ENCODE measurements at regions of chr4 and their contacts with region 1.

Region 1: DNA sequence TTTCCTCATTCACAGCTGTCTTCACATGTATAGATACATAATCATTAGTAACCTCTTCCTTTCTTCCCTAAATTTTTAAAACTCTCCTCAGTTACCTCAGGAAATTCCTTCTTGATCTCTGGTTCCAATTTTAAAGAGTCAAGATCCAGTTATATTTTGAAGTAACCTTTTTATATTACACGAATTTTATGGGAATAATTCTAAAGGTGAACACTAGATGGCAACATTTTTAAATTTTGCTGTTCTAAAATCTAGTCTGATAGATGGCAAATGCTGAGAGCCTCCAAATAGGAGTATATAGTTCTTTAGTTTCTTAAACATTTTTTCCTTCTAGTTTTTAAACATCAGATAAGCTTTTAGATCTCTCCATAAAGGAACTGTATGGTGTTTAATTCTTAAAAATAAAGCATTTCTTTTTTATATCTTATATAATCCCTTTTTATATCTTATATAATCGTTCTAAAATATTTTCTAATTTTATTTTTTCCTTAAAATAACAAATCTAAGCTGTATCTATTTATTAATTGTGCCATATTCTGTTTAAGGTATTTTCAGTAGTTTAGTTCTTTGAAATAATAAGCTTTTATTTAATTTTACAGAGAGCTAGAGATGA is 37.9 kb upstream of the PAPSS1 start:
- DNase-seq: peak; percentile 13
- H3K4me3 ChIP-seq: no peak overlapping the region
- CTCF ChIP-seq: no peak

Region 2: GRCh38 chr4:107719922-107720722 is 37.8 kb before region 1 on chr4 and contains the start of gene PAPSS1:
- in situ Hi-C with region 1: no loop called
- DNase-seq: peak; percentile 91
- H3K4me3 ChIP-seq: peak within 1 kb of the TSS; percentile 93
- CTCF ChIP-seq: no peak

Region 3: DNA sequence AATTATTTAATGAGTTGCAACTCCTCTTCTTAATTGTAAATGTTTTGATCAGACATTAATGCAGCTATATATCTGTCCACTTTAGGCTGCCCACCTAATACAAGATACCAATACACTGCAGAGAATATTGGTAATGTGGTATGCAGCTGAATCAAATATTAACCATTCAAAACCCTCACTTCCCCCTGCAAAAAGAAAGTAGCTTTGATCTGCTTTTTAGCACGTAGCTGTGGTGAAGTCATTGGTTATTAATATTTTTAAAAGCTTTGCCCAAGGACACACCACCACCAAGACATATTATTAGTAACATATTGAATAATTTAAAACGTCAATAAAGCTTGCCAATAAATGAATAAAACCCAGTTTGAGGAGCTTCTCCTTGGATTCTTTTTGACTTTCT is 144.7 kb after region 1 on chr4:
- in situ Hi-C with region 1: loop called (anchors 10 kb)
- DNase-seq: no peak
- H3K4me3 ChIP-seq: no peak overlapping the region
- CTCF ChIP-seq: no peak

Measured in astrocyte of the cerebellum (primary cell).